PC-3 (cell line): ENCODE measurements at regions of chr4 and their contacts with region 1.

Region 1: DNA sequence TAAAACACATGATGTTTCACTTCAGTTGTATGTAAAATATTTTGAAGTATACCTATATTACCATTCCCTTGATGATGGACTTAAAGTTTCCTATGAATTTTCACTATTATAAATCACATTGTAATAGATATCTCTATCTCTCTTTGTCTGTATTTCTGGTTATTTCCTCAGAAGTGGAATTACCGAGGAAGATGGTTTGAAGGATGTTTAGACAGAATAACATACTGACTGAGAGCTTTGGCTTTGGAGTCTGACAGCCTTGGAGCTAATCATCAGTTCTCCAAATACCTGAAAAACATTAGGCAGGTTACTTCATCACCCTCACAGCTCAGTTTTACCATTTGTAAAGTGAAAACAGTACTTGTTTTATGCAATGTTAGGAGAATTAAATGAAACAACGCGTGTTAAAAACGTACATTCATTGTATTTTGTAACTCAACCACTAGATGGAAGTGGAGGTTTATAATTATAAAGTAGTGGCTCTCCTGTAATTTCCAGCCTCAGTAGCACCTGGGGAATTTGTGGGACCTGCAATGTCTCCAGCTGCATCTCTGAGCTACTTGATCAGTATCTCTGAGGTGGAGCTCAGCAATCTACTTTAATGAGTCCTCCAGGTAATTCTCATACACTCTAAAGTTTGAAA is 14.3 kb downstream of the JCHAIN start:
- DNase-seq: peak; percentile 77
- ATAC-seq: peak; percentile 74
- H3K4me3 ChIP-seq: peak overlapping the region; percentile 48; the same call in 1 of the 2 replicates
- H3K27ac ChIP-seq: no peak overlapping the region
- H3K4me1 ChIP-seq: no peaks in the 10 kb centered on the region
- H3K27me3 ChIP-seq: no peaks in the 10 kb centered on the region
- CTCF ChIP-seq: peak; percentile 85

Region 2: DNA sequence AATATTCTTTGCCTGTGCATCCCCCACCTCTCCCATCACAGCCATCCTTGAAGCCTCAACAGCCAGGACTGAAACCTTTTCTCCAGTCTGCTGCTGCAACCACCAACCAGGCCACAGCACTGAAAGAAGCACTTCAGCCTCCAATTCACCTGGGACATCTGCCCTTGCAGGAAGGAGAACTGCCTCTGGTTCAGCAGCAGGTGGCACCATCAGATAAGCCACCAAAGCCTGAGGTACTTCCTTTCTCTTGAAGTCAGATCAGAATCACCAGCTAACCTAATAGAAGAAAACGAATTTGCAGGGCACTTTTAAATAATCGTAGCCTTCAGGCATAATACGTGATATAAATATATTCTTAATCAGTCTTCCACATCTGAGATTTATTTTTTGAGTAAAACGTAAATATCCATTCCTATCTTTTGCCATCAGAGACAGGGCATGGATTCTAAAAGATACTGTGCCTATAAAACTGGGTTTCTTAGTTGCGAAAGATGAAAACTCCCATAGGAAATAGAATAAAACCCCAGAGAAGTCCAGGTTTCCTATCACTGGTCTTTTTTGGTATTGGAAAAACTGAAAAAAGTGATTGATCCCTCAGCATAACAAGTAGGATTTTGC is 50.5 kb before region 1 on chr4:
- CTCF ChIA-PET with region 1: no interaction called
- POLR2A ChIA-PET with region 1: no interaction called
- intact Hi-C with region 1: loop called (anchors 1 kb)
- DNase-seq: peak; percentile 83
- ATAC-seq: peak; percentile 98
- H3K4me3 ChIP-seq: no peak overlapping the region
- H3K27ac ChIP-seq: no peak overlapping the region
- H3K4me1 ChIP-seq: no peaks in the 10 kb centered on the region
- H3K27me3 ChIP-seq: no peaks in the 10 kb centered on the region
- CTCF ChIP-seq: peak; percentile 93

Region 3: GRCh38 chr4:70666369-70666768 is 14.4 kb after region 1 on chr4 and contains the start of gene JCHAIN:
- CTCF ChIA-PET with region 1: no interaction called
- POLR2A ChIA-PET with region 1: no interaction called
- intact Hi-C with region 1: no loop called
- DNase-seq: peak; percentile 23
- ATAC-seq: peak; percentile 25; the same call in 1 of the 2 replicates
- H3K4me3 ChIP-seq: no peak within 1 kb of the TSS
- H3K27ac ChIP-seq: no peak within 1 kb of the TSS
- H3K4me1 ChIP-seq: peaks cover 19% of the 10 kb centered on the region
- H3K27me3 ChIP-seq: no peaks in the 10 kb centered on the region
- CTCF ChIP-seq: no peak
- total RNA-seq, gene JCHAIN: not detected in 2 replicates